Mucosa of descending colon (tissue), 3 donors: ENCODE measurements at regions of chr1 and their contacts with region 1.

Region 1: DNA sequence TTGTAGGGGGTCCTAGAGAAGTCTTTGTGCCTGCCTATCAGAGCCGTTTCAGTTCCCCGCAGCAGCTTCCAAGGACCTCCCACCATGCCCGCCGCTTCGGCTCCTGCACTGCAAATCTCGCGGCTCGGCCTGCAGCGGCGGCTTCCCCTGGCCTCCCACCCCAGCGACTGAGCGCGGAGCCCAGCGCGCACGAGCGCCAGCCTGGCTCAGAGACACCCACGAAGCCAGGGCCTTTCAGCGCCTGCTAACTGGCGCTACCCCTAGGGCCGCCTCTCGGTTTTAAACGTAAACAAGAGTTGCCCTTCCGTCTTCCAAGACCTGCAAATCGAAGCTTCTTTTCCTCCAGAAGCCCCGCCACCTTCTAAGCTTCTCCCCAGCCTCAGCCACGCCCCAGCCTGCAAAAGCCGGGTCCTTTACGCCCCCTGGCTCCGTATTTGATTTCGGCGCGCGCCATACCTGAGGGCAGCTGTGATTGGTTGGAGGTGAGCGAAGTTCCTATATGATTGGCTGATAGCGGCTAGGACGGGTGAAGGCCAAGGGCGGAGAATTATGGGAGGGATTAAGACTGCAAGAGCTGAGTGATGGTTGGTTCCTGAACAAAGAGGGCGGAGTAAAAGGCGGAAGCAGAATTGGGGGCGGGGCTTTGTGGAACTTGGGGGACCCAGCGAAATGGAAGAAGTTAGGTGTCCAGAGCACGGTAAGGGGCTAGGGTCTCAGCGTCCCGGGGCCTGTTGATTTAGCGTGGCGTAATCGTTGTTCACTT is at the start of gene TTF2:
- DNase-seq: peak; percentile 95 to 98 (median 95)
- ATAC-seq: peak; percentile 95
- H3K4me3 ChIP-seq: peak within 1 kb of the TSS; percentile 60
- H3K4me1 ChIP-seq: peaks cover 5% of the 10 kb centered on the region
- CTCF ChIP-seq: no peak
- total RNA-seq, gene TTF2: 21.5 to 35.4 (median 30.2) TPM

Region 2: GRCh38 chr1:116570358-116571200 is 489.3 kb before region 1 on chr1 and contains the start of gene CD58:
- intact Hi-C with region 1: loop called in 1 of 2 experiments (anchors 10 kb)
- DNase-seq: peak; percentile 93 to 96 (median 96)
- ATAC-seq: peak; percentile 92
- H3K4me3 ChIP-seq: peak within 1 kb of the TSS; percentile 70
- H3K4me1 ChIP-seq: peaks cover 13% of the 10 kb centered on the region
- CTCF ChIP-seq: peak; percentile 88
- total RNA-seq, gene CD58: 19.3 to 31.9 (median 31.0) TPM

Region 3: GRCh38 chr1:116737020-116737854 is 322.6 kb before region 1 on chr1:
- intact Hi-C with region 1: loop called in 1 of 2 experiments (anchors 5 kb)
- DNase-seq: peak in 2 of 3 donors; percentile 75 to 79
- ATAC-seq: peak; percentile 83
- H3K4me3 ChIP-seq: no peak overlapping the region
- H3K4me1 ChIP-seq: no peaks in the 10 kb centered on the region
- CTCF ChIP-seq: peak; percentile 53

Region 4: DNA sequence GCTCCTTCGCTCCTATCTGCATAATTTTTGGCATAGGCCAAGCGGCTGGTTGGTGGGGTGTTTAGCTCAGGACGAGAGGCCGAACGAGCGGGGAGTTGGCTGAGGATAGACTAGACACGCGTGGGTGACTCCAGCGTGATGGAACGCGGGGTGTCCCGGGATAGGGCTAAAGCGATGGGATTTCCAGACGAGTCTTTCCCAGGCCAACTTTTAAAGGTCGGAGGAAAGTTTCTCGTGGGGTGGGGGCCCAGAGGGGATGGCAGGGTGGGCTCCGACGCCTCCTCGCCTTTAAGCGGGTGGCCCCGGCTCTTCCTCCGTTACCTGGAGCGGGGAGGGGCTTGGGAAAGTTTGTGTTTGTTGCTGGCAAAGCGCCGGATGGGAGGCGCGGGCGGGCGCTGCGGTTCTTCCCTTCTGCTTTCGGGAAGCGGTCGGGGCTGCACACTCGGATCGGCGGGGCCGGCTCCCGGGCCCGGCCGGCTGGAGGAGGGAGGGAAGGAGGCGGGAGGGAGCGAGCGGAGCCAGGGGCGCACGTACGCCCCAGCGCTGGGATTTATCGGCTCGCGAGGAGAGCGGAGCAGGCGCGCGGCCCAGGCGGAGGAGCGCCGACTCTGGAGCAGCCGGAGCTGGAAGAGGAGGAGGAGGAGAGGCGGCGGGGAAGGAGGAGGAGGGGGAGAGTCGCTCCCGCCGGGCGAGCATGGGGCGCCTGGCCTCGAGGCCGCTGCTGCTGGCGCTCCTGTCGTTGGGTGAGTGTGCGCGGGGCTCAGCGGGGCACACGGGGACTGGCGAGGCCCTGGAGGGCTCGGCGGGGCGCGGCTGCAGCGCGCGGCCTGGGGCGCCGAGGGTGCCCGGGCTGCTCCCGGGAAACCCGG is 150.1 kb before region 1 on chr1 and contains the start of gene PTGFRN:
- intact Hi-C with region 1: loop called in 1 of 2 experiments (anchors 10 kb)
- DNase-seq: peak; percentile 76 to 86 (median 79)
- ATAC-seq: peak; percentile 72
- H3K4me3 ChIP-seq: peak within 1 kb of the TSS; percentile 59
- H3K4me1 ChIP-seq: peaks cover 7% of the 10 kb centered on the region
- CTCF ChIP-seq: no peak
- total RNA-seq, gene PTGFRN: 74.4 to 185 (median 84.4) TPM

Region 5: DNA sequence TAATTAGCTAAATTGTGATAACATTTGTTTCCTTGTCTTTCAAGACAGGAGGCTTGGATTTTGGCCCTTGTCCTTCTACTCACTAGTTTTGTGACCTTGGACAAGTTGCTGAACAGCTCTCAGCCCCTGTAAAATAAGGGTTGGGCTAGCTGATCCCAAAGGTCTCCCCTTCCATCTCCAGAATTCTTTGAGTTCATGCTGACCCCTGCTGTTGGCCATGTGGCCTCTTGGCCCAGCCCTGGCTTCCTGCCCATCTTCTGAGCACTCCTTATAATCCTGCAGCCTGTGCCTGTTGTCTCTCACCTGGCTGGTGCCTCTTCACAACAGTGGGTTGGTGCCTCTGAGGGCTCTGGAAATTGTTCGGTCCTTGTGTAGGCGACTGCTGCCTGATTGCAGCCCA is 140.1 kb before region 1 on chr1:
- intact Hi-C with region 1: loop called in 1 of 2 experiments (anchors 5 kb)
- DNase-seq: peak in 2 of 3 donors; percentile 50 to 56
- ATAC-seq: no peak
- H3K4me3 ChIP-seq: no peak overlapping the region
- H3K4me1 ChIP-seq: peaks cover 45% of the 10 kb centered on the region
- CTCF ChIP-seq: no peak

Region 6: DNA sequence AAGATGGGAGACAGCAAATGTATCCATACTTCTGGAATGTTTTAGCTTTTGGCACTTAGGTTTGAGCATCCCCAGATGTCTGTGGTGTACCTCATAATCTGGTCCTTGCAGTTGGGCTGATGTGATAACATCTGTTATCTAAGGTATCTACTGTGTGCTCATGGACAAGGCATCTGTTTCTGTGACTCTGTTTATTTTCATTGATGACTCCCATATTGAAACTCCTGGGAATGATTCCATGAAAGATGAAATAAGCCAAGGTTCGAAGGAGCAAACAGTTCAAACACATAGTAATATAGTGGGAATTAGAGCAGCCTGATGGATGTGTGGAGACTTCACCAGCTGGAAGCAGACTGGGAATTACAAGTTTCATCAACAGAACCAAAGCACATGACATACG is 82.3 kb after region 1 on chr1:
- intact Hi-C with region 1: no loop called
- DNase-seq: no peak
- ATAC-seq: no peak
- H3K4me3 ChIP-seq: no peak overlapping the region
- H3K4me1 ChIP-seq: no peaks in the 10 kb centered on the region
- CTCF ChIP-seq: no peak

Region 7: DNA sequence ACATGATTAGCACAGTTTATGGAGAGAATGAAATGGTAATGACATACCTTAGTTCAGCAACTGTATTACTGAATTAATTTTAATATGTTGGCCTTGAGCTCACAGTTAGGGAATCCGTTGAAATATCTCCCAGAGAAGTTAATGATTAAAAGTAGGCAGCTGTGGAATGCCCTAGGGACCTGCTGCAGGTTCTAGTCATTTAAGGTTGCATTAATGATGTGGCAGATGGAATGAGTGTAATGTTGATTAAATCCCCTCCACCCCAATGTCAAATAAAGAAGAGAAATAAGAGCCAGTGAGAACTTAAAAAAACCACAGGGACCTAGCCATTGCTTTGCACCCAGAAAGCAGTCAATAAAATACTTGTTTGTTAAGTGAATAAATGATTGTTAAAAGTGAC is 102.0 kb after region 1 on chr1:
- intact Hi-C with region 1: no loop called
- DNase-seq: no peak
- ATAC-seq: peak; percentile 65
- H3K4me3 ChIP-seq: no peak overlapping the region
- H3K4me1 ChIP-seq: peaks cover 3% of the 10 kb centered on the region
- CTCF ChIP-seq: no peak

Region 8: GRCh38 chr1:117284399-117285215 is 224.7 kb after region 1 on chr1:
- intact Hi-C with region 1: loop called (anchors 5 to 10 kb)
- DNase-seq: peak in 1 of 3 donors; percentile 11
- ATAC-seq: peak; percentile 75
- H3K4me3 ChIP-seq: no peak overlapping the region
- H3K4me1 ChIP-seq: no peaks in the 10 kb centered on the region
- CTCF ChIP-seq: peak; percentile 15

Region 9: DNA sequence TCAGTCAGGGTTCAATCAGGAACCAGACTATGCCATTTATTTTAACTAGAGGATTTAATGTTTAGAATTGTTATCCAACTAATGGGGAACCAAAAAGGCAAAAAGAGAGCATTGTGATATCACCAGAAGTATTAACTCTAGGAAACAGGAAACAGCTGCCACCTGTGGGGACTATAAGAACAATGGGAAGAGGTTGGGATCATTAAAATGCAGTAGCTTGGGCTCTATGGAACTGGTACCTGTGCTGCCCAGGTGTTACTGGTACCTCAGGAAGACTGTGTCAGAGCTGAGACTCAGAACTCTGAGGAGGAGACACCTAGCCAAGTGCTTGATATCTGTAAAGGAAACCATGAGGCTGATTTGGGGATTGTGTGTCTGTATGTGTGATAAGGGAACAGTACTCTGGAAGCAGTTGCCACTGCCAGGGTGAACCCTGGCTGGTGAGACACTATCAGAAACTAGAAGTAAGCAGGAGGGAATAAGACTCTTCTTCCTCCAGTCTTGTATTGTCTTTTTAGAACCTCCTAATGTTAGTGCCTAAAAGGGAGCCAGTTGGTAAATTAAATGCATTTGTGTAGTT is 356.8 kb after region 1 on chr1:
- intact Hi-C with region 1: no loop called
- DNase-seq: no peak
- ATAC-seq: no peak
- H3K4me3 ChIP-seq: no peak overlapping the region
- H3K4me1 ChIP-seq: no peaks in the 10 kb centered on the region
- CTCF ChIP-seq: no peak